Common myeloid progenitor, CD34-positive (primary cell): ENCODE measurements at regions of chr2 and their contacts with region 1.

Region 1: GRCh38 chr2:97697252-97698235 is 15.8 kb upstream of the ZAP70 start:
- DNase-seq: peak; percentile 83 to 93 (median 88)
- H3K4me3 ChIP-seq: peak overlapping the region in 1 of 7 experiments; percentile 59
- H3K27ac ChIP-seq: no peak overlapping the region
- H3K4me1 ChIP-seq: peaks cover 0 to 4% (median under 1%) of the 10 kb centered on the region in 4 experiments
- H3K27me3 ChIP-seq: no peaks in the 10 kb centered on the region

Region 2: DNA sequence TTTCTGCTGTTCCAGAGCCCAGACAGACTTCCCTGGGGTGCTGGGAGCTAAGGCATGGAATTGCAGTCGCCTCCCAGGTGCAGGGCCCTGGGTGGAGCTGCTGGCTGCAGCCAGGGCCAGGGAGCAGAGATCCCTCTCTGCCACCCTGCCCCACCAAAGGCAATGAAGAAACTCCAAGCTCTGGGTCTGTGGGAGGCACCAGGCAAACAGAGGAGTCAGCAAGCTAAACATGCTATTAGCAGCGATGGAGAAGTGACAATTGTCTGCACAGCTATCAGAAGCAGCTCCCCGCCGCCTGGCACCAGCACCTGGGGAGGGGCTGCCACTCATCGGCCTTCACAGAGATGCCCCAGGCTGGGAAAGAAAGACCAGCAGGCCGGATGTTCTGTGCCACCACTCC is 79.6 kb before region 1 on chr2:
- CTCF ChIA-PET with region 1: no interaction called
- POLR2A ChIA-PET with region 1: no interaction called
- DNase-seq: no peak
- H3K4me3 ChIP-seq: no peak overlapping the region
- H3K27ac ChIP-seq: no peak overlapping the region
- H3K4me1 ChIP-seq: no peaks in the 10 kb centered on the region
- H3K27me3 ChIP-seq: no peaks in the 10 kb centered on the region

Region 3: DNA sequence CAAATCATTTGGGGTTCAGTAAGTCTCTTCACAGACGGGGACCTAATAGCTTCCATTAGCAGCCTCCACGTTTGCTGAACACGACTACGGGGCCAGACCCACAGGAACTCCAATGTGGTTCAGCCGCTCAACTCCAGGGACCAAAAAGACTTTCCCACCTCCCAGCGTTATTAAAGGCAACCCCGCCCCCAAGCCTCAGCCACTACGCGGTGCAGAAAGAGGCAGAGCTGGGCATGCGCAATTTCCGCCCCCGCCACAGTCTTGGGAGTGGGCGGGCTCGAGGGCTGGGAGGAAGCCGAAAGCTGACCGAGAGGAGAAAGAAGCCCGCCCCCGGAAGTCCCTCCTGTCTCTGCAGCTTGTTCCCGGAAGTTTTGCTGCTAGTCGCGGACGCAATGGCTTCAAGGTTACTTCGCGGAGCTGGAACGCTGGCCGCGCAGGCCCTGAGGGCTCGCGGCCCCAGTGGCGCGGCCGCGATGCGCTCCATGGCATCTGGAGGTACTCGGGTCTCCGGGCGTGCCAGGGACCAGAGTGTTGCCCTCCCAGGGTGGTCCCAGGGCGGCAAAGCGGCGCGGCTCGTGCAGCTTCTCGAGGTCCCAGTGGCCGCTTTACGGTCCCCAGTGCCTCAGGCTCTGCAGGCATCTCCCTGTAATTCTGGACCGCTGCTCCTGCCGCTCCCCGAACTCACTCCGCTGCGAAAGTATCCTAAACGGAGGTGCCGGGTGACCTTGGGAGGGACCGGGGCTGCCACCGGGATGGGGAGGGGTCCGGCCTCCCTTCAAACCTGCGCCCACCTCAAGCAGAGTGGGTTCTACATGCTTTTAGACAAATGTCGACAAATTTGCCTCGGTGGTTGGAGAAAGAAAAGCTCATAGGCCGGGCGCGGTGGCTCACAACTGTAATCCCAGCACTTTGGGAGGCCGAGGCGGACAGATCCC is 51.6 kb before region 1 on chr2 and contains the start of gene COX5B:
- CTCF ChIA-PET with region 1: interaction called, 31 read pairs
- POLR2A ChIA-PET with region 1: no interaction called
- DNase-seq: peak; percentile 97 to 99 (median 98)
- H3K4me3 ChIP-seq: peak within 1 kb of the TSS; percentile 74 to 99 (median 95)
- H3K27ac ChIP-seq: peak within 1 kb of the TSS; percentile 82 to 92
- H3K4me1 ChIP-seq: peaks cover 3 to 22% (median 18%) of the 10 kb centered on the region in 4 experiments
- H3K27me3 ChIP-seq: no peaks in the 10 kb centered on the region

Region 4: DNA sequence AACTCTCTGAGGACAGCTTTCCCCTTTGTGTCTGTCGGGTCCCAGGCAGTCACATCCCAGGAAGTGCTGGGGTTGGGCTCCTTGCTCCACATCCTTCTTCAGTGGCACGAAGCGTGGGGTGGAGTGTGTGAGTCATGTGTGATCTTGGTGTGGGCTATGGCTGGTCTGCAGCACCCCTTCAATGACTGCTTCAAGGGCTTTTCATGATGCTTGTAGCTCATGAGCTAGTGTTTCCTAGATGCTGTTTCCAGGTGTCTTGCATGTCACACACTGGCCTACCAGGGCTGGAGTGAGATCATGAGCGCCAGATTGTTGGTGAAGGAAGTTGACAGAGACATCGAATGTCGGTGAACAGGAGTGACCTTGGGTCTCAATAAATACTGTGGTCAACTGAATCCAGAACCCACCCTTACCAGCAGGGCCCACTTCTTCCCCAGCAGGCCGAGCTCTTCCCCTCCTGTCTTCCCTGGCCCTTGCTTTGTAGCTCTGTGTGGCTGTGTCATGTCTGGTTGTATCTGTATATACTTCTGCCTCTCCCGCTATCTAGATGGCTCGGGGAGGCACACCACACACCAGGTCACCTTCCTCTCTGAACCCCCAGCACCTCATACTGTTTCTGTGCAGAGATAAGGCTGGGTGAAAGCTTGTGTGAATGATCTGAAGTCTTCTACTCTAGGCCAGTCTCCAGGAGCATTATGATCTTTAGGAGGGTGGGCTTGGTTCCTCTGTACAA is 24.2 kb before region 1 on chr2:
- CTCF ChIA-PET with region 1: interaction called, 11 read pairs
- POLR2A ChIA-PET with region 1: no interaction called
- DNase-seq: peak; percentile 42 to 84 (median 75)
- H3K4me3 ChIP-seq: no peak overlapping the region
- H3K27ac ChIP-seq: peak overlapping the region; percentile 82 to 87
- H3K4me1 ChIP-seq: peaks cover 7 to 28% (median 25%) of the 10 kb centered on the region in 4 experiments
- H3K27me3 ChIP-seq: no peaks in the 10 kb centered on the region

Region 5: GRCh38 chr2:97740590-97741182 is 43.1 kb after region 1 on chr2:
- CTCF ChIA-PET with region 1: interaction called, 64 read pairs
- POLR2A ChIA-PET with region 1: no interaction called
- DNase-seq: peak; percentile 38 to 65 (median 60)
- H3K4me3 ChIP-seq: no peak overlapping the region
- H3K27ac ChIP-seq: no peak overlapping the region
- H3K4me1 ChIP-seq: peaks cover 0 to 7% (median 4%) of the 10 kb centered on the region in 4 experiments
- H3K27me3 ChIP-seq: no peaks in the 10 kb centered on the region

Region 6: GRCh38 chr2:97766567-97766966 is 69.0 kb after region 1 on chr2:
- CTCF ChIA-PET with region 1: interaction called, 15 read pairs
- POLR2A ChIA-PET with region 1: no interaction called
- DNase-seq: peak; percentile 33 to 67 (median 54)
- H3K4me3 ChIP-seq: peak overlapping the region in 2 of 7 experiments; percentile 33 to 53
- H3K27ac ChIP-seq: no peak overlapping the region
- H3K4me1 ChIP-seq: peaks cover 6 to 35% (median 17%) of the 10 kb centered on the region in 4 experiments
- H3K27me3 ChIP-seq: no peaks in the 10 kb centered on the region

Region 7: GRCh38 chr2:97890093-97890492 is 192.5 kb after region 1 on chr2:
- CTCF ChIA-PET with region 1: no interaction called
- POLR2A ChIA-PET with region 1: no interaction called
- DNase-seq: no peak
- H3K4me3 ChIP-seq: no peak overlapping the region
- H3K27ac ChIP-seq: no peak overlapping the region
- H3K4me1 ChIP-seq: no peaks in the 10 kb centered on the region
- H3K27me3 ChIP-seq: no peaks in the 10 kb centered on the region

Region 8: DNA sequence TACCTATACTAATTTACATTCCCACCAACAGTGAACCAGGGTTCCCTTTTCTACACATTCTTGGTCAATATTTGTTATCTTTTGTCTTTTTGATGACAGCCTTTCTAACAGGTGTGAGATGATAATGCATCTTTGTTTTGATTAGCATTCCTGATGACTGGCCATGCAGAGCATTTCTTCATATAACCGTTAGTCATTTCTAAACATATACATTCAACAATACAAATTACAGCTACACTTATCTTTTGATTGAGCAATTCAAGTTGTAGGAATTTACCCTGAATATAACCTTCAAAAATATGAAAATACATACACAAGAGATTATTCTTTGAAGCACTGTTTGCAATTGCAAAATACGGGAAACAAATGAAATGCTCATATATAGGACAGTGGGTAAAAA is 203.3 kb after region 1 on chr2:
- CTCF ChIA-PET with region 1: no interaction called
- POLR2A ChIA-PET with region 1: no interaction called
- DNase-seq: no peak
- H3K4me3 ChIP-seq: no peak overlapping the region
- H3K27ac ChIP-seq: no peak overlapping the region
- H3K4me1 ChIP-seq: no peaks in the 10 kb centered on the region
- H3K27me3 ChIP-seq: no peaks in the 10 kb centered on the region

Region 9: GRCh38 chr2:98385050-98385699 is 687.6 kb after region 1 on chr2:
- CTCF ChIA-PET with region 1: interaction called, 26 read pairs
- POLR2A ChIA-PET with region 1: no interaction called
- DNase-seq: peak; percentile 65 to 88 (median 84)
- H3K4me3 ChIP-seq: no peak overlapping the region
- H3K27ac ChIP-seq: no peak overlapping the region
- H3K4me1 ChIP-seq: peaks cover 0 to 3% (median 0%) of the 10 kb centered on the region in 4 experiments
- H3K27me3 ChIP-seq: peaks cover 0 to 2% (median 0%) of the 10 kb centered on the region in 5 experiments